Heart left ventricle (tissue), 16 donors: ENCODE measurements at regions of chr20 and their contacts with region 1.

Region 1: GRCh38 chr20:57432874-57433491 is 41.8 kb downstream of the RBM38 start:
- DNase-seq: peak; percentile 66 to 83 (median 73)
- ATAC-seq: peak; percentile 71 to 87 (median 76)
- H3K4me3 ChIP-seq: no peak overlapping the region
- H3K27ac ChIP-seq: peak overlapping the region in 11 of 12 donors; percentile 1 to 79 (median 44)
- H3K4me1 ChIP-seq: peaks cover 0 to 53% (median 29%) of the 10 kb centered on the region in 12 donors
- H3K27me3 ChIP-seq: no peaks in the 10 kb centered on the region
- CTCF ChIP-seq: no peak
- POLR2A ChIP-seq: peak in 1 of 2 donors; percentile 23

Region 2: DNA sequence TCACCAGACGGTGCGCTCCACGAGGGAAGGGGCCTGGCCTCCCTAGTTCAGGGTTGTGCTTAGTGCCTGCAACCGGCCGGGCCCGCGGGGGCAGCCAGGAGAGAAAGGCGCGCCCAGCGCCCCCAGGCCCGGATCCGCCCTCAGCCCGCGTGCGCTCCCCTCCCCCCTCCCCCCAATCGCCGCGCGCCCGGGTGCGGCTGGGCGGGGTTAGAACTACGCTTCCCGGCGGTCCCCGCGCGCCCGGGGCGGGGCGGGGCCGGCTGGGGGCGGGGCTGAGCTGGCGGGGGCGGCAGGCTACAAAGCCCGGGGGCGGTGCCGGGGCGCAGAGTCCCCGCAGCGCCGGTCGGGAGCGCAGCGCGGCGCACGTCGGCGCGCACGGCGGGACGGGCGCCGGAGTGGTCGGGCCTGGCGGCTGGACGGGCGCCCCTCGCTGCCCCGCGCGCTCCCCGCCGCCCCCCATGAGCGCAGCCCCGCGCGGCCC is 41.9 kb before region 1 on chr20 and contains the start of gene RBM38:
- intact Hi-C with region 1: loop called in 7 of 10 experiments (anchors 2 to 5 kb)
- DNase-seq: peak; percentile 66 to 89 (median 75)
- ATAC-seq: peak; percentile 24 to 77 (median 62)
- H3K4me3 ChIP-seq: peak within 1 kb of the TSS; percentile 63 to 94 (median 75)
- H3K27ac ChIP-seq: peak within 1 kb of the TSS; percentile 80 to 97 (median 90)
- H3K4me1 ChIP-seq: peaks cover 10 to 70% (median 51%) of the 10 kb centered on the region in 12 donors
- H3K27me3 ChIP-seq: no peaks in the 10 kb centered on the region
- CTCF ChIP-seq: no peak
- POLR2A ChIP-seq: no peak
- total RNA-seq, gene RBM38: 45.6 to 97.9 (median 62.3) TPM

Region 3: DNA sequence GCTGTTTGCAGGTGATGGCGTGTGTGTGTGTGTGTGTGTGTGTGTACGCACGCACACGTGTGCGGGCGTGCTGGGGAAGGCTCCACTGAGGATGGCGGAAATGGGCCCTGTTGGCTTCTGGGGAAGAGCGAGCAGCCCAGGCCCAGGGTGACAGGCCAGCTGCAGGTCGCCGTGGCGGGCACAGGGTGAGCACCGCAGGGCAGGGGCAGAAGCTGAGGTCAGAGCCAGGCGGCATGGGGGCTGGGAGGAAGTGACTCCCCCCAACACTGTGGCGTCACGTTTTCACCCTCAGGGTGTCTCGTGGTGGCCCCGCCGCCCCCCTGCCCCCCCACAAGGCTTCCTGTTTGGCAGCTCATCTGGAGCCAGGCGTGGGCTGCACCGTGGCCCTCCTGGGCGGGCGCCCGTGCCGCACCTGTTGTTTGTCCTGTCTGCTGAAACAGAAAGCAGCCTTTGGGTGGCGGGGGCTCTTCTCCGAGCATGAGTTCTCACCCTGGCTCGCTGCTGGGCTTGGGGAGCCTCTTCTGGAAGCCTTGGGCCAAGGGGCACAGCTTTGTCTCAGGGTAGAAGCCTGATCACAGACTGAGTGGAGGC is 34.7 kb before region 1 on chr20:
- intact Hi-C with region 1: loop called in 7 of 10 experiments (anchors 2 to 5 kb)
- DNase-seq: peak; percentile 52 to 80 (median 64)
- ATAC-seq: peak in 3 of 4 donors; percentile 1 to 37 (median 2)
- H3K4me3 ChIP-seq: peak overlapping the region in 4 of 12 donors; percentile 1 to 30 (median 19)
- H3K27ac ChIP-seq: peak overlapping the region in 10 of 12 donors; percentile 35 to 97 (median 54)
- H3K4me1 ChIP-seq: peaks cover 26 to 98% (median 74%) of the 10 kb centered on the region in 12 donors
- H3K27me3 ChIP-seq: no peaks in the 10 kb centered on the region
- CTCF ChIP-seq: no peak
- POLR2A ChIP-seq: no peak

Region 4: DNA sequence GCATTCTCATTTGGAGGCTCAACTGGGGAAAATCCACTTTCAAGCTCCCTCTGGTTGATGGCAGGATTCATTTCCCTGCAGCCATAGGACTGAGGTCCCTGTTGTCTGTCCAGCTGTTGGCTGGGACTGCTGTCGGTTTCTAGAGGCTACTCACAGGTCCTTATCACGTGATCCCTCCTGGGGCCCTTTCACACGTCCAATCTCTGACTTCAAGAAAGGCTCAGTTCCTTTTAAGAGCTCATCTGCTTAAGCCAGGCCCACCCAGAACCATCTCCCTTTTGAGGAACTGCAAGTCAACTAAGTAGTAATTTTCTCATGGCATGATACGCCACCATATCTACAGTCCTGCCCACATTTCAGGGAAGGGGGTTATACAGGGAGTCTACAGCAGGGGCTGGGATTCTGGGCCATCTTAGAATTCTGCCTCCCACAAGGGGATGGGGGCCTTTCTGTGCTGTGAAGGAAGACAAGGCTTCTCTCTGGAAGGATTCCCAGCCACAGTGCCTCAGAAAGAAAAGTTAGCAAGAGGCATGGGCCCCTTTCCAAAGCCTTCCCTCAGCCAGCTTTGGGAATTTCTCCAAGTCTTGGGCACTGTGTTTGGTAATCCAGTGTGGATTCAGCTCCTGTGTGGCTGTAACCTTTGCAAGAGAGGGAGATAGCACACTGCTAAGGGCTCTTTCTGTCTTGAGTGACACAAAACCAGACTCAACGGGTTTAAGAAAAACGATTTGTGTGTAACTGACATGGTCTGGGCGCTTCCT is 25.6 kb after region 1 on chr20:
- intact Hi-C with region 1: no loop called
- DNase-seq: no peak
- ATAC-seq: peak in 3 of 4 donors; percentile 23 to 61 (median 48)
- H3K4me3 ChIP-seq: no peak overlapping the region
- H3K27ac ChIP-seq: peak overlapping the region in 7 of 12 donors; percentile 9 to 79 (median 48)
- H3K4me1 ChIP-seq: peaks cover 0 to 56% (median 9%) of the 10 kb centered on the region in 12 donors
- H3K27me3 ChIP-seq: no peaks in the 10 kb centered on the region
- CTCF ChIP-seq: no peak
- POLR2A ChIP-seq: no peak

Region 5: GRCh38 chr20:57473246-57474048 is 40.5 kb after region 1 on chr20:
- intact Hi-C with region 1: loop called in 1 of 10 experiments (anchors 5 kb)
- DNase-seq: peak in 1 of 5 donors; percentile 65
- ATAC-seq: peak in 2 of 4 donors; percentile 21 to 40
- H3K4me3 ChIP-seq: no peak overlapping the region
- H3K27ac ChIP-seq: peak overlapping the region in 1 of 12 donors; percentile 67
- H3K4me1 ChIP-seq: peaks cover 0 to 36% (median 10%) of the 10 kb centered on the region in 12 donors
- H3K27me3 ChIP-seq: peaks cover 0 to 14% (median 0%) of the 10 kb centered on the region in 9 donors
- CTCF ChIP-seq: peak in 1 of 12 donors; percentile 6
- POLR2A ChIP-seq: no peak

Region 6: DNA sequence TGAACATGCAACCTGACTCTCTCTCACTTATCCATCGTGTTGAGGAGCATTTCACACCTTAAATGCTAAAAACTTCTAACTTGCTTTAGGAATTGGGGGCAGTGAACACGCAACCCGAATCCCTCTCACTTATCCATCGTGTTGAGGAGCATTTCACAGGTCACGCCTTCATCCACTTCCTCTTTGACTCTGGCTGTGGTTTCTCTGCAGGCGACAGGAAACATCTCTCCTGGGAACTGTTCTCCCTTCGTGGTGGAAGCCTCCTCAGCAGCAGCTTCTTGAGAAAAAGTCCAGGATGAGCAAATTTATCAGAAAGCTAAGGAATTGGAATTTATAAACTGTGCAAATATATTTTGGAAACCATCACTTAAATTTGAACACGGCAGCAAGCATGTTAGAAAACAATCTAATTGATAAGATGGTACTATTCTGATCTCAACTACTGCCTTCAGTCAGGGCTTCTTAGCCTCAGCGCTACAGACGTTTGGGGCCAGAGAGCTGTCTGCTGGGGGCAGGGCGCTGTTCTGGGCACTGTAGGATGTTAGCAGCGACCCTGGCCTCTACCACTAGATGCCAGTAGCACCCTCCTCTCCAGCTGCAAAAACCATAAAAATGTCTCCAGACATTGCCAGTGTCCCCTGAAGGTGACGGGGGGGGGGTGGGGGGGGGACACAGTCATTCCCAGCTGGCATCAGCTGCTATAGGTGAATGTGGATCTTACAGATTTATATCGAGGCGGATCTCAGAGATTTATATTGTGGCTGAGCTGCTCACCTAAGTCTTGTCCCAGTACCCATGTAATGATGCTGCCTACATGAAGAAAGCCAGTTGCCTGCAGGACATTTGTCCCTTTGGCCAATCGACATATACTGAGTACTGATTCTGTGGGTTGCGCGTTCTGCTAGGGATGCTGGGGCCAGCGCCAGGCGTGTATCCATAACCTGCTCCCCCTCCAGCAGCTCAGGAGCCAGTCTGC is 65.7 kb after region 1 on chr20:
- intact Hi-C with region 1: loop called in 2 of 10 experiments (anchors 2 to 10 kb)
- DNase-seq: peak in 1 of 5 donors; percentile 49
- ATAC-seq: peak in 3 of 4 donors; percentile 53 to 73 (median 69)
- H3K4me3 ChIP-seq: no peak overlapping the region
- H3K27ac ChIP-seq: no peak overlapping the region
- H3K4me1 ChIP-seq: peaks cover 0 to 30% (median 8%) of the 10 kb centered on the region in 12 donors
- H3K27me3 ChIP-seq: peaks cover 0 to 37% (median 0%) of the 10 kb centered on the region in 9 donors
- CTCF ChIP-seq: peak in 7 of 12 donors; percentile 5 to 35 (median 21)
- POLR2A ChIP-seq: no peak